PC-9 (cell line): ENCODE measurements at regions of chr19 and their contacts with region 1.

Region 1: GRCh38 chr19:13060964-13061927 is 41.4 kb downstream of the LYL1 start:
- DNase-seq: peak in 1 of 2 experiments; percentile 74
- H3K4me3 ChIP-seq: peak overlapping the region; percentile 44
- H3K27ac ChIP-seq: no peak overlapping the region
- H3K4me1 ChIP-seq: peaks cover 5% of the 10 kb centered on the region; the same call in 1 of the 2 replicates
- H3K27me3 ChIP-seq: peaks cover 46% of the 10 kb centered on the region
- CTCF ChIP-seq: peak; percentile 97

Region 2: GRCh38 chr19:12913011-12913561 is 148.2 kb before region 1 on chr19:
- CTCF ChIA-PET with region 1: no interaction called
- POLR2A ChIA-PET with region 1: no interaction called
- intact Hi-C with region 1: no loop called
- DNase-seq: no peak
- H3K4me3 ChIP-seq: no peak overlapping the region
- H3K27ac ChIP-seq: no peak overlapping the region
- H3K4me1 ChIP-seq: no peaks in the 10 kb centered on the region
- H3K27me3 ChIP-seq: no peaks in the 10 kb centered on the region
- CTCF ChIP-seq: no peak

Region 3: GRCh38 chr19:12983542-12984142 is 77.6 kb before region 1 on chr19:
- CTCF ChIA-PET with region 1: interaction called, 12 read pairs
- POLR2A ChIA-PET with region 1: no interaction called
- intact Hi-C with region 1: loop called (anchors 1 kb)
- DNase-seq: peak in 1 of 2 experiments; percentile 78
- H3K4me3 ChIP-seq: no peak overlapping the region; the same call in 1 of the 2 replicates
- H3K27ac ChIP-seq: no peak overlapping the region
- H3K4me1 ChIP-seq: peaks cover 15% of the 10 kb centered on the region
- H3K27me3 ChIP-seq: peaks cover 19% of the 10 kb centered on the region
- CTCF ChIP-seq: peak; percentile 97

Region 4: DNA sequence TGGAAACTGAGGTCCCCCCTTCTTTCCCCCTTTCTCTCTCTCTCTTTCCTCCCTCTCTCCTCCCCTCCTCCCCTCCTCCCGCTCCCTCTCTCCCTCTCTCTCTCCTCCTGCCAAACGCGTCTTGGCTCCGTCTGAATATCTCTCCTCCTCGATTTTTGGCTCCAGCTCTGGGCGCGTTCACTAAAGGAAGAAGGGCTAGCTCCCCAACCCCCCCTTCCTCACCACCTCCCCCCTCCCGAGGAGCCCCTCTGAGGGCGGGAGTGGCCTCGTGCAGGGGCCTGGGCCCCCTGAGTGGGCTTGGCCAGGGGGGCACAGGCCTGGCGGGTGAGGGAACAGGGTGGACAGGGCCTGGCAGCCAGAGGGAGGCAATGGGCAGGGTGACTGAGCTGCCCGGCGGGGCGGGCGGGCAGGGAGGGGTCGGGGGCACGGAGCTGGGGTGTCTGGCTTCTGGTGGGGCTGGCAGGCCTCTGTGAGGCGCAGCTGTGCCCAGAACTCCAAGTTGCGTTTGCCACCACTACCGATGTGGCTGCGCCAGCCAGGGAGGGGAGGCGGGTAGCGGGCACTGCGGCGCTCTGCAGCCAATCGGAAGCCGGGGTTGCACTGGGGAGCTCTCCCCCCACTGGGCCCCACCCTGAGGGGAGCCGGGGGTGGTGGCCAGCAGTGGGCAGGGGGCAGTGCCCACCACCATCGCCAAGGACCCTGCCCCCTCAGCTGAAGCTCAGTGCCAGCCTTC is 58.9 kb before region 1 on chr19:
- CTCF ChIA-PET with region 1: no interaction called
- POLR2A ChIA-PET with region 1: no interaction called
- intact Hi-C with region 1: no loop called
- DNase-seq: no peak
- H3K4me3 ChIP-seq: no peak overlapping the region
- H3K27ac ChIP-seq: no peak overlapping the region
- H3K4me1 ChIP-seq: no peaks in the 10 kb centered on the region
- H3K27me3 ChIP-seq: no peaks in the 10 kb centered on the region; the same call in 1 of the 2 replicates
- CTCF ChIP-seq: no peak

Region 5: GRCh38 chr19:13093407-13094105 is 32.3 kb after region 1 on chr19:
- CTCF ChIA-PET with region 1: interaction called, 13 read pairs
- POLR2A ChIA-PET with region 1: no interaction called
- intact Hi-C with region 1: no loop called
- DNase-seq: peak; percentile 75
- H3K4me3 ChIP-seq: no peak overlapping the region
- H3K27ac ChIP-seq: no peak overlapping the region
- H3K4me1 ChIP-seq: peaks cover 9% of the 10 kb centered on the region; the same call in 1 of the 2 replicates
- H3K27me3 ChIP-seq: no peaks in the 10 kb centered on the region
- CTCF ChIP-seq: peak; percentile 99

Region 6: DNA sequence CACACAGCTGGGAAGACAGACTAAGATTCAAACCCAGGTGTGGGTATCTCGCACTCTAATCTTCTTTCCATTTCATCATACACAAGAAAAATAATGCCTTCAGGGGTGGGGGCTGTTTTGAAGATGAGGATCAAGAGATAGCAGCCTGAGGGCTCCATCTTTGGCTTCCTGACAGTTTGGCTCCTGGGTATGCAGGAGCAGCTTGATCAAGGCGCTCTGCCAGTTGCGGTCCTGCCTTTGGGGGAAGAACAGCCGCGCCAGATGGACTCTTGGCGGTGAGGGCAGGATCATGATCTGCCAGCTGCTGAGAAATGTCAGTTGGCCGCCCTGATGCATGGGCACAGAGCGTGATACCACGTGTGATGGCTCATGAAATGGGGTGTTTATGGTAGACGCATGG is 208.1 kb after region 1 on chr19:
- CTCF ChIA-PET with region 1: interaction called, 10 read pairs
- POLR2A ChIA-PET with region 1: no interaction called
- intact Hi-C with region 1: no loop called
- DNase-seq: no peak
- H3K4me3 ChIP-seq: no peak overlapping the region
- H3K27ac ChIP-seq: no peak overlapping the region
- H3K4me1 ChIP-seq: no peaks in the 10 kb centered on the region
- H3K27me3 ChIP-seq: no peaks in the 10 kb centered on the region
- CTCF ChIP-seq: no peak